A549 (cell line): ENCODE measurements at regions of chr3 and their contacts with region 1.

Region 1: DNA sequence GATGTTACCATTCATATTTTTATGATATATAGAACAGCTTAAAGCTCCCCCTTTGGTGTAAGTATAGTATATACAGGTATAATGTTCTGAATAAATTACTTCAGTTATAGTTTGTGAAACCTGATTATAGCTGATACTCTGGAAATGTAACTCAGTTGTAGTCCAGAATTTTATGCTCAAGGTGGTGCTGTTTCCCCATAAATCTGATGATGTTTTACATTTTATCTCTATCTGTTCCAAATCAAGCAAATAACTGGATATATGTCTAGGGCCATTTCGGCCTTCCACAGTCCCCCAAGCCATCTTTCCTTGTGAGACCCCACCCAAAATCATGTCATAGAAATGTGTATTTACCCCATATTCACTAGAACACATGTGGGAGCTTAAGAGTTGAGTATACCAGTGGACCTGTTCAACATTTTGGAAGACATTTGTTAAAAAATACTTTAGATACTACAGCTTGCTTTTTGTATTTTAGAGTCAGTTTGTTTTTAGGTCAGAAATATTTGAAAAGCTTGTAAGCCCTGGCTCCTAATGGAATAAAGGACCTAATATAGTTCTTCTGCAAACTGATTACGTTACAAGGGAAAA is 107.1 kb downstream of the ATG7 start:
- DNase-seq: peak; percentile 25 to 46
- ATAC-seq: peak; percentile 74 to 86; a peak in 5 of 6 replicates
- H3K4me3 ChIP-seq: no peak overlapping the region
- H3K27ac ChIP-seq: no peak overlapping the region
- H3K4me1 ChIP-seq: no peaks in the 10 kb centered on the region
- CTCF ChIP-seq: peak; percentile 80
- EP300 ChIP-seq: no peak
- POLR2A ChIP-seq: no peak
- RAD21 ChIP-seq: peak; percentile 83 to 88

Region 2: DNA sequence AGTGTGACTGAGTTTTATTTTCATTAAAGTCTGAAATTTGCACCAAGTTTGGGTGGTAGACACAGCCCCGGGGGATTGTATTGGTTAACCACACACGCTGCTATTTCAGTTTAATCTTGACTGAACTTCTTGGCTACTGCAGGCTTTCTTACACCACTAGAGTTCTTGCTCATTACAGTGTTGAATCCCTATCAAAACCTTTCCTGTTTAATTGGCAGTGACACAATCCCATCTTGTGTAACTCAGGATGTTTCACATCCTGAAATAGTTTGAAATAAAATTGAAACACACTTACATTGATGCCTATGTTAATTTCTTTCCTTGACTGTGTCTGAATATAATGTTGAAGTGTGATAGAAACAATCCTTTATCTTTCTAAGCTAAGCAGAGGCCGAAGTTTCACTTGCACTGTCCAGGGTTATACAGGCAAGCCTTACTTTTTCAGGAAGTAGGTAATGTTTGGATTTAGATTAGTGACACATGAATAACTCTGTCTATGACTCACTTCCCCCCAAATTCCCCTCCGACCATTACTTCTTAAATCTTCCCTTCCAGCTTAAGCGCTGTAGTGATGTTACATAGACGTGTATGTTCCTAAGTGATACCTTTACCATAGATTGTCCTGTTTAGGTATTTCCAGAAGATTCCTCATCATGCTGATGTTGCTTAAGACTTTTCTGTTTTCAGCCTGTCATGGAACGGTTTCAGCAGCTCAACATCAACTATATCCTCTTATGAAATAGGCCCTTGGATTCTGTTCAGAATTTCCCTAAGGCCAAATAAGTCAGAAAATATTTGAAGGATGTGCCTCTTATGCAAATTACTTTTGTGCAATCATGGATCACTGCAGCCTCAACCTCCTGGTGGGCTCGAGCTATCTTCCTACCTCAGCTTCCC is 90.3 kb before region 1 on chr3:
- CTCF ChIA-PET with region 1: no interaction called
- POLR2A ChIA-PET with region 1: no interaction called
- DNase-seq: peak; percentile 64 to 79
- ATAC-seq: peak; percentile 91 to 94
- H3K4me3 ChIP-seq: peak overlapping the region; percentile 6; the same call in 1 of the 3 replicates
- H3K27ac ChIP-seq: peak overlapping the region; percentile 73 to 85
- H3K4me1 ChIP-seq: peaks cover 46% of the 10 kb centered on the region
- CTCF ChIP-seq: no peak
- EP300 ChIP-seq: peak in 1 of 2 experiments; percentile 50; a peak in 2 of 5 replicates
- POLR2A ChIP-seq: no peak
- RAD21 ChIP-seq: no peak

Region 3: DNA sequence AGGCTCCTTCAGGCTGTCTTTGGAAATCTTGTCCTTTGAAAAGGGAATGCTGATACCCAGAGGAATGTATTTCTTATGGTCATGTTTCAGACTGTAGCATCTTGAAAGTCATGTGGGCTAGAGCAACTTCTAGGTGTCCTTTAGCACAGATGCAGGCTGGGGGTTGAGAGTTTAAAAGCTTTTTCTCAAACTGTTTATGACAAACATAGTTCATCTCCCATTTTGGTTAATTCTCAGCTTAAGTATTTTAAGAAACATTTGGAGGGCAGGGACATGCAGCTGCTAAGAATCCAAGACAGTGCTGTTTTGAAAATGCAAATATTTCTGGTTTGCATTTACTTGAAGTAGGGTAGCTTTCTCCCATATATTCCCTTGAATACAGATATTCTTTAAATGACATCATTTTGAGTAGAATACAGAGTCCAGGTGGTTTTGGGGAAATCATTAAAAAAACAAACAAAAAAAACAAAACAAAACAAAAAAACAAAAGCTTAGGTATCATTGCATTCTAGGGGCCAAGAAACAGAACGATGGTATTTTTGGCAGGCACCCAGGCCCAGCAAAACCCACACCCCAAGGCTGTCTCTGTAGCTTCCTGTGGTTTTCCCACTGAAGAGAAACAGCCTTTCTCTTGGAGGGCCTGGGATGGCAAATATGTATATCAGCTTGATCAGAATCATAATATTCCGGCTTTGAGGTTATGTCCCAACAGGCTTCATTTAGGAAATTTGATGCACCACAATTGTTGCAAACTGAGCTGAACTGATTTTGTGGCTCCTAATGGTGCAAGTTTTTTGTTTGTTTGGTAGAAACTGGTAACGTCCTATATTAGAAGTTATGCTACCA is 12.9 kb after region 1 on chr3:
- CTCF ChIA-PET with region 1: interaction called, 26 read pairs
- POLR2A ChIA-PET with region 1: no interaction called
- DNase-seq: no peak
- ATAC-seq: no peak
- H3K4me3 ChIP-seq: no peak overlapping the region
- H3K27ac ChIP-seq: no peak overlapping the region
- H3K4me1 ChIP-seq: peaks cover 4% of the 10 kb centered on the region; the same call in 1 of the 3 replicates
- CTCF ChIP-seq: no peak
- EP300 ChIP-seq: no peak
- POLR2A ChIP-seq: no peak
- RAD21 ChIP-seq: no peak

Region 4: GRCh38 chr3:11643605-11644087 is 264.3 kb after region 1 on chr3 and contains the start of gene VGLL4:
- CTCF ChIA-PET with region 1: interaction called, 26 read pairs
- POLR2A ChIA-PET with region 1: interaction called, 3 read pairs
- DNase-seq: peak; percentile 79 to 83
- ATAC-seq: peak; percentile 91 to 96
- H3K4me3 ChIP-seq: peak within 1 kb of the TSS; percentile 61
- H3K27ac ChIP-seq: peak within 1 kb of the TSS; percentile 84 to 88
- H3K4me1 ChIP-seq: peaks cover 17% of the 10 kb centered on the region; the same call in 2 of the 3 replicates
- CTCF ChIP-seq: no peak
- EP300 ChIP-seq: no peak
- POLR2A ChIP-seq: peak; percentile 75
- RAD21 ChIP-seq: peak; percentile 20 to 21; a peak in 2 of 5 replicates
- polyA plus RNA-seq, gene VGLL4: 26.3 and 28.1 TPM in 2 replicates

Region 5: GRCh38 chr3:11803977-11804892 is 424.9 kb after region 1 on chr3:
- CTCF ChIA-PET with region 1: interaction called, 15 read pairs
- POLR2A ChIA-PET with region 1: interaction called, 5 read pairs
- DNase-seq: peak; percentile 65 to 68
- ATAC-seq: peak; percentile 84 to 91; a peak in 5 of 6 replicates
- H3K4me3 ChIP-seq: no peak overlapping the region
- H3K27ac ChIP-seq: no peak overlapping the region
- H3K4me1 ChIP-seq: no peaks in the 10 kb centered on the region
- CTCF ChIP-seq: peak; percentile 65
- EP300 ChIP-seq: no peak
- POLR2A ChIP-seq: no peak
- RAD21 ChIP-seq: peak; percentile 50 to 59

Region 6: DNA sequence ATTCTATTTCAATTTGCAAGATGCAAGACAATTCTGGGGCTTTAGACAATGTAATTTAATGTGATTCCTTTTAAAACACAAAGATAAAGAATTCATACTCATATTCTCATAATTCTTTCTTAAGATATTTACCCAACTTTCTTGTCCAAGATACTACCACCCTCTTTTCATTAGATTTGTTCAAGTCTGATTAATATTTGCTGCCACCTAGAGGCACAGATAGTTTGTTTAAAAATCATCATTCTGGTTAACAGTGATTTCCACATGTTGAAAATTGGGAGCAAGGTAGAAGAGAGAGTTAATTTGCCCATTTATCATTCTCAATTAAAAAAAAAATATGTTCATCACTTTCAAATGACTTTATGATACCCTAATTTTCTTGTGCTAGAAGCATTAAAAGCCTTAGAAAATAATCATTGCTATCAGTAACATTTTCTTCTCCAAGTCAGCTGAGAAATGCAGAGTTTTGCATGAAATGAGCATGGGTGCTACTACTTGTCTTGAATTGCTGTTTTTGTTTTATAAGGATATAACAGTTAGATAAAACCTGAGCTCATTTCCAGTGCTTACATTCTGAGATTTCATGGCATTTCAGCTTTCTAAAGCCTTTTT is 455.8 kb after region 1 on chr3:
- CTCF ChIA-PET with region 1: interaction called, 35 read pairs
- POLR2A ChIA-PET with region 1: no interaction called
- DNase-seq: peak; percentile 30 to 38
- ATAC-seq: peak in 1 of 2 experiments; percentile 67; a peak in 3 of 6 replicates
- H3K4me3 ChIP-seq: no peak overlapping the region
- H3K27ac ChIP-seq: no peak overlapping the region
- H3K4me1 ChIP-seq: no peaks in the 10 kb centered on the region
- CTCF ChIP-seq: peak; percentile 59
- EP300 ChIP-seq: no peak
- POLR2A ChIP-seq: no peak
- RAD21 ChIP-seq: peak; percentile 58 to 59